Pancreas (tissue), 10 donors: ENCODE measurements at regions of chr18 and their contacts with region 1.

Region 1: DNA sequence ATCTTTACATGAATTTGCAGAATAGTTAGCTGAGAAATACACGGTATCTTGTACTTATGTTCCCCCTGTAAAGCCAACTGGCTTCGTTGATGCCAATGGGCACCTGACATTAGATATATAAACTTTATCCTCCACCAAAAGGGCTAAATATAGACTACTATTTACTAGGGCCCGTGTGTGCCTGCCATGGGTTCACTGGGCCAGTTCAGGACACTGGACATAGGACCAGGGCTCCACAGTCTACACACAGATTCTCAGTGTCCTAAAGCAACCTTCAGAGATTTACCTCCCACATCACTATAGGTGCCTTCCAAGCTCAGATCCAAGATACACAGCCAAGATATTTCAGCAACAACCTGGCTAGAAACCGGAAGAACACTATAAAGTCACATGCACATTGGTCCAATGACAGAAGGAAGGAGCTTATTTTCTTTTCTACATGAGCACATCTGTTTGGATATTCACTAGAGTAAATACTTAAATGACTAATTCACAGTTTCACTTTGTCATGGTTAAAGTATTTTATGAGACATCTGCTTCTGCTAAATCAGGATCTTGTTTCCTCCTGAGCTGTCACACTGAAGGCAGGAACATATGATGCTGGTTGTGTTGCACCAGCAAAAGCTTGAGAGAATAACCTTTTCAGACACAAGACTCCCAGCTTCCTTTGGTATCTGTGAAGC is 95.1 kb downstream of the MYO5B start:
- DNase-seq: no peak
- ATAC-seq: peak; percentile 8 to 60 (median 34)
- H3K4me3 ChIP-seq: no peak overlapping the region
- H3K27ac ChIP-seq: peak overlapping the region in 2 of 4 donors; percentile 48 to 89
- H3K4me1 ChIP-seq: peaks cover 0 to 20% (median 0%) of the 10 kb centered on the region in 3 donors
- H3K27me3 ChIP-seq: no peaks in the 10 kb centered on the region
- CTCF ChIP-seq: no peak

Region 2: GRCh38 chr18:50194631-50195532 is 95.0 kb after region 1 on chr18 and contains the start of gene MYO5B:
- intact Hi-C with region 1: loop called in 1 of 3 experiments (anchors 10 kb)
- DNase-seq: peak; percentile 86 to 95 (median 92)
- ATAC-seq: peak; percentile 93 to 96 (median 95)
- H3K4me3 ChIP-seq: peak within 1 kb of the TSS; percentile 70 to 87 (median 76)
- H3K27ac ChIP-seq: peak within 1 kb of the TSS; percentile 55 to 78 (median 68)
- H3K4me1 ChIP-seq: no peaks in the 10 kb centered on the region
- H3K27me3 ChIP-seq: no peaks in the 10 kb centered on the region
- CTCF ChIP-seq: peak in 3 of 4 donors; percentile 25 to 50 (median 29)
- total RNA-seq, gene MYO5B: 11.4 to 25.3 (median 14.3) TPM